IMR-90 (cell line): ENCODE measurements at regions of chr15 and their contacts with region 1.

Region 1: GRCh38 chr15:63668601-63669000 is 71.4 kb downstream of the FBXL22 start:
- DNase-seq: no peak
- ATAC-seq: no peak
- H3K4me3 ChIP-seq: no peak overlapping the region
- H3K27ac ChIP-seq: no peak overlapping the region
- H3K4me1 ChIP-seq: no peaks in the 10 kb centered on the region
- H3K27me3 ChIP-seq: no peaks in the 10 kb centered on the region
- CTCF ChIP-seq: no peak
- POLR2A ChIP-seq: no peak
- RAD21 ChIP-seq: no peak

Region 2: GRCh38 chr15:63626955-63627354 is 41.6 kb before region 1 on chr15:
- CTCF ChIA-PET with region 1: no interaction called
- POLR2A ChIA-PET with region 1: no interaction called
- dilution Hi-C with region 1: no loop called
- in situ Hi-C with region 1: no loop called
- intact Hi-C with region 1: loop called (anchors 5 kb)
- DNase-seq: no peak
- ATAC-seq: no peak
- H3K4me3 ChIP-seq: no peak overlapping the region
- H3K27ac ChIP-seq: no peak overlapping the region
- H3K4me1 ChIP-seq: peaks cover 9% of the 10 kb centered on the region
- H3K27me3 ChIP-seq: no peaks in the 10 kb centered on the region
- CTCF ChIP-seq: no peak
- POLR2A ChIP-seq: no peak
- RAD21 ChIP-seq: no peak

Region 3: GRCh38 chr15:64460206-64460734 is 791.7 kb after region 1 on chr15 and contains the start of gene ZNF609:
- CTCF ChIA-PET with region 1: no interaction called
- POLR2A ChIA-PET with region 1: no interaction called
- dilution Hi-C with region 1: no loop called
- in situ Hi-C with region 1: no loop called
- intact Hi-C with region 1: no loop called
- DNase-seq: peak; percentile 94
- ATAC-seq: peak; percentile 86
- H3K4me3 ChIP-seq: peak within 1 kb of the TSS; percentile 70
- H3K27ac ChIP-seq: peak within 1 kb of the TSS; percentile 81
- H3K4me1 ChIP-seq: peaks cover 14% of the 10 kb centered on the region
- H3K27me3 ChIP-seq: no peaks in the 10 kb centered on the region
- CTCF ChIP-seq: no peak
- POLR2A ChIP-seq: peak; percentile 34; the same call in 1 of the 2 replicates
- RAD21 ChIP-seq: peak; percentile 40; the same call in 1 of the 2 replicates
- total RNA-seq, gene ZNF609: 10.4 and 12.2 TPM in 2 replicates